ENCODE measurements at regions of chr5 and their contacts with region 1.

Region 1: DNA sequence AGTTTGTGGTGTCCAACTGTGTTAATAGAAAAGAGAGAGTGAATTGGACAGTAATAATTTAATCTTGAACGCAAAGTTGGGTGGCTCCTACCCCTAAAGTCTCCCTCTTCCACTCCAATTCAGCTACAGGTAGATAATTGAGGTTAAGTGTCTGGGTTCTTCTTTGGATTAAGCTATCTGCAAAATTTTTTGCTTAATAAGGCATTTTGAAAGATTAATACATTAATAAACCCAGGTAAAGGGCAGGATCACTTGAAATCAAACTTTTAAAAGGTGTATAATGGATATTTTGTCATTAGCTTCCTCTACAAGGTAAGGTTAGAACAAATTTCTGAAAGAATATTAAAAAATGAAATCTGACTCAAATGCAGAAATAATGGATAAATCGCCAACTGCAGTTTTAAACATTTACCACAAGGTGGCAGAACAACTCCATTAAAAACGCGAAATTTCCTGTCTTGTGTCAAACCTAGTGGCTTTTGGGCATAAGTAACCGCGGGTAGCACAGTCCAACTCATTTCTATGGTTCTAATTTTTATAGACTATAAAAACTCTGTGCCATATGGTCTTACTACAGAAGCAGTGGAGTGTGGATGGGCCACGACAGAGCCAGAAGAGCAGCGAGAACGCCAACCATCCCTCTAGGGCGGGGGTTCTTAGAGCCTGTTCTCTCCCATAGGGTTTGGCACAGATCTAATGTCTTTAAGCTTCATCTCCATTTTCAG is 276.5 kb downstream of the ARHGEF28 start:
- DNase-seq: peak; percentile 77
- ATAC-seq: peak; percentile 63
- H3K4me3 ChIP-seq: no peak overlapping the region
- H3K27ac ChIP-seq: no peak overlapping the region
- H3K4me1 ChIP-seq: peaks cover 4% of the 10 kb centered on the region
- H3K27me3 ChIP-seq: no peaks in the 10 kb centered on the region
- CTCF ChIP-seq: peak; percentile 80
- POLR2A ChIP-seq: no peak
- RAD21 ChIP-seq: peak; percentile 81

Region 2: GRCh38 chr5:74648835-74649293 is 746.4 kb after region 1 on chr5:
- CTCF ChIA-PET with region 1: interaction called, 6 read pairs
- POLR2A ChIA-PET with region 1: no interaction called
- dilution Hi-C with region 1: no loop called
- in situ Hi-C with region 1: loop called (anchors 5 kb)
- intact Hi-C with region 1: loop called (anchors 1 kb)
- DNase-seq: peak; percentile 65
- ATAC-seq: peak; percentile 93
- H3K4me3 ChIP-seq: peak overlapping the region; percentile 48
- H3K27ac ChIP-seq: no peak overlapping the region
- H3K4me1 ChIP-seq: peaks cover 5% of the 10 kb centered on the region
- H3K27me3 ChIP-seq: no peaks in the 10 kb centered on the region
- CTCF ChIP-seq: peak; percentile 66
- POLR2A ChIP-seq: no peak
- RAD21 ChIP-seq: peak; percentile 85

Measured in IMR-90 (cell line).